Right cardiac atrium (tissue), 5 donors: ENCODE measurements at regions of chr6 and their contacts with region 1.

Region 1: GRCh38 chr6:79777713-79778579 is 146.8 kb downstream of the SH3BGRL2 start:
- DNase-seq: peak; percentile 83 to 92 (median 91)
- ATAC-seq: peak; percentile 93 to 95
- H3K4me3 ChIP-seq: peak overlapping the region; percentile 55
- H3K27ac ChIP-seq: no peak overlapping the region
- H3K4me1 ChIP-seq: no peaks in the 10 kb centered on the region
- H3K27me3 ChIP-seq: no peaks in the 10 kb centered on the region

Region 2: GRCh38 chr6:79369026-79369425 is 408.9 kb before region 1 on chr6:
- intact Hi-C with region 1: no loop called
- DNase-seq: no peak
- ATAC-seq: no peak
- H3K4me3 ChIP-seq: no peak overlapping the region
- H3K27ac ChIP-seq: no peak overlapping the region
- H3K4me1 ChIP-seq: no peaks in the 10 kb centered on the region
- H3K27me3 ChIP-seq: no peaks in the 10 kb centered on the region

Region 3: GRCh38 chr6:79869600-79870084 is 91.7 kb after region 1 on chr6:
- intact Hi-C with region 1: loop called in 2 of 4 experiments (anchors 5 kb)
- DNase-seq: peak; percentile 79 to 89 (median 89)
- ATAC-seq: peak; percentile 98 to 99
- H3K4me3 ChIP-seq: no peak overlapping the region
- H3K27ac ChIP-seq: no peak overlapping the region
- H3K4me1 ChIP-seq: no peaks in the 10 kb centered on the region
- H3K27me3 ChIP-seq: no peaks in the 10 kb centered on the region

Region 4: GRCh38 chr6:80094017-80094416 is 316.1 kb after region 1 on chr6:
- intact Hi-C with region 1: loop called in 1 of 4 experiments (anchors 10 kb)
- DNase-seq: no peak
- ATAC-seq: no peak
- H3K4me3 ChIP-seq: no peak overlapping the region
- H3K27ac ChIP-seq: no peak overlapping the region
- H3K4me1 ChIP-seq: no peaks in the 10 kb centered on the region
- H3K27me3 ChIP-seq: no peaks in the 10 kb centered on the region